ENCODE measurements at regions of chr10 and their contacts with region 1.

Region 1: DNA sequence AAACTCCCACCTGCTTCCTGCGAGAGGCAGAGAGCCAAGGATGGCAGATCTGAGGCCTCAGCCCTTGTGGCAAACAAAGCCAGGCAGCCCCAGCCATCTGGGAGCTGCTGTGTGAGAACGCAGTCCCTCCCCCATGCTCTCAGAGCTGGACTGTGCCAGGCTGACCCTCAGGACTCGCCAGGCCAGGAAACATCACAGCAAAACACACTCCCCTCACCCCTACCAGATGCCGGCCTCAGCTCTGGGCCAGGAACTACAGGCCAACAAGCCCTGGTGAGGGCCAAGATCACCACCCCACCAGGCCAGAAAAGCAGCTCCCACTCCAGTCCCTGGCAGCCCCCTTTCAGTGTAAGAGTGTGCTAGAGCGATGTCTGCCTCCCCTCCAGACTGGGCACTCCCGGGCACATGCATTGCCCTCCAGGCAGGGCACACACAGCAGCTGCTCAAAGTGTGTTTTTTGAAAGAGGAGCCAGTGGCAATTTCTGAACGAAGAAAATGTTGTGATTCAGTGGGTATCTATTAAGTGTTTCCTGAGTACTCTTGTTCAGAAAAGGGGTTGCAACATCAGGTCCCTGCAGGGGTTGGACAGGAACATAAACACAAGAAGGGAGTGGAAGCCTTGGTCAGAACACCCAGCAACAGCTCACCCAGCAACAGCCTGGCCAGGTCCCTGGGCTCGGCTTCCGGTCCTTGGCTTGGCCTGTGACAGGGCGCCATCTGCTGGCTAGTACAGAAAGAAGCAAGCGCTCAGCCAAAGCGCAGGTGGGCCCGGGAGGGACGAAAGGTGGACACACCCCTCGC is 18.3 kb downstream of the LRRC20 start:
- DNase-seq: peak; percentile 81 to 93 (median 90)
- H3K4me3 ChIP-seq: peak overlapping the region in 29 of 59 donors; percentile 0 to 44 (median 23)
- H3K27ac ChIP-seq: peak overlapping the region in 58 of 59 donors; percentile 48 to 93 (median 81)
- H3K27me3 ChIP-seq: no peaks in the 10 kb centered on the region
- CTCF ChIP-seq: peak; percentile 79 to 99 (median 96)

Region 2: DNA sequence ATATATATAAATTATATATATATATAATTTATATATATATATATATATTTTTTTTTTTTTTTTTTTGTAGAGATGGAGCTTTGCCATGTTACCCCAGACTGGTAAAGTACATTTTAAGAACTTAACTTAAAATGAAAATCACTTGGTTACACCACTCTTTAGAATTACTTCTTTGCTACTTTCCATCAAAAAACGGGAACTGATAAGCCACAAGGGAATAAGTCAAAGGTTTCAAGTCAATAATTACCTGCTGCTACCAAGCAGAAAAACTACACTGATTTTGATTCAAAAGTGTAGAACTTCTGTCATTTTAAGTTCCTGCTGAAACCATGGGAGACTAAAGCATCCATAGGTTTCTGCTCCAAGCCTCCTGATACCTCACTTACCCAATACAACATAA is 143.1 kb before region 1 on chr10:
- intact Hi-C with region 1: loop called (anchors 1 to 5 kb)
- DNase-seq: no peak
- H3K4me3 ChIP-seq: peak overlapping the region in 11 of 59 donors; percentile 2 to 38 (median 12)
- H3K27ac ChIP-seq: peak overlapping the region in 40 of 59 donors; percentile 1 to 76 (median 48)
- H3K27me3 ChIP-seq: no peaks in the 10 kb centered on the region
- CTCF ChIP-seq: no peak

Region 3: DNA sequence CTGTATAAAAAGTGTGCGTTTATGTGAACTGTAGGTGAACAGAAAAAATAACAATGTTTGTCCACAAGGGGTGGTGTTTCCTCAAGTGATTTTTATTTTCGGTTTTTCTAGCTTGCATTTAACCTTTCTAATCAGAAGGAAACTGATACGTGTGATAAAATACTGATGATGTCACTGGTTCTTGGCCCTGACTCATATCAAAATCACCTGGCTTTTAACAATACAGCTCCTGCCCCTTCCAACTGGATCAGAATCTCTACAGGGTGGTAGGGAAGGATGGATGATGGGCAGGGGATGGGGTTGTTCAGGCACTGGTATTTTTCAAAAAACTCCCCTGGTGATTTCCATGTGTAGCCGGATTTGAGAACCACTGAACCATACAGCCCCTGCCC is 91.2 kb before region 1 on chr10:
- intact Hi-C with region 1: loop called (anchors 5 to 10 kb)
- DNase-seq: no peak
- H3K4me3 ChIP-seq: peak overlapping the region in 3 of 59 donors; percentile 2 to 14 (median 3)
- H3K27ac ChIP-seq: peak overlapping the region in 2 of 59 donors; percentile 7 to 21
- H3K27me3 ChIP-seq: no peaks in the 10 kb centered on the region
- CTCF ChIP-seq: peak; percentile 24 to 70 (median 52)

Measured in dorsolateral prefrontal cortex (tissue), 120 donors.